ENCODE measurements at regions of chr4 and their contacts with region 1.

Region 1: GRCh38 chr4:52983563-52984303 is 121.6 kb downstream of the RASL11B start:
- DNase-seq: peak; percentile 59
- H3K27ac ChIP-seq: no peak overlapping the region
- CTCF ChIP-seq: peak; percentile 67

Region 2: GRCh38 chr4:52545099-52546069 is 438.3 kb before region 1 on chr4:
- CTCF ChIA-PET with region 1: interaction called, 23 read pairs
- POLR2A ChIA-PET with region 1: no interaction called
- DNase-seq: peak; percentile 75
- H3K27ac ChIP-seq: no peak overlapping the region
- CTCF ChIP-seq: peak; percentile 79